Activated CD4-positive, alpha-beta T cell treated with anti-CD3 and anti-CD28 coated beads for 36 hours (primary cell): ENCODE measurements at regions of chr1 and their contacts with region 1.

Region 1: DNA sequence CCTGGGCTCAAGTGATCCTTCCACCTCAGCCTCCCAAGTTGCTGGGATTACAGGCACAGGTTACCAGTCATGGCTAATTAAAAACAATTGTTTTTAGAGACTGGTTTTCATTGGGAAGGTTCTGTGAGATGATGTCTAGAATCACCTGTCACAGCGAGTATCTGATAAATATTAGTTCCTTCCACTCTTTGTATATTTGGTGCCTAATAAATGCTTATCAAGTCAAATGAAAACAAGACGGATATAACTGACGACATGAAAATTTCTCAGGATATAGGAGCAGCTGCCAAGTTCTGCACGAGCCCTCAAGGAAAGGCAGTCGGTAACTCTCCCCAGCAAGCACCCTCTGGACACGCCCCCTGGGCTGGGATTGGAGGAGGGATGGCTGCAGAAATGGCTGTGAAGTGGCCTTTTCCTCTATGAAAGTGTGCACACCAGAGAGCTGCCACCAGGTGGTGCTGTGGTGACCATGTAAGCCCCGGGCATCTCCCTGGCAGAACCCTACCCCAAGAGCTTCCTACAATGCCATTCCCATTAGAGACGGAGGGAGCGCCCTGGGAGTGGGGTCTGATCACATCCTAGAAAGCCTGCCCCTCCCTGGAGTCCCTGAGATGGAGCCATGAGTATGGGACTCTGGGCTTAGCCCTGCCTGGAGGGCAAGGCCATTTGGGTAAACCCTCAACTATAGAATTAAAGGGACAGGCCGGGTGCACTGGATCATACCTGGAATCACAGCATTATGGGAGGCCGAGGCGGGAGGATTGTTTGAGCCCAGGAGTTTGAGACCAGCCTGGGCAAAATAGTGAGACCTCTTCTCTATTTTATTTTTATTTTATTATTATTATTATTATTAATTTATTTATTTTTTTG is 50.9 kb downstream of the HTR6 start:
- DNase-seq: peak; percentile 95
- ATAC-seq: peak; percentile 77
- H3K4me3 Mint-ChIP-seq: no peak overlapping the region
- H3K27ac Mint-ChIP-seq: no peak overlapping the region
- H3K4me1 Mint-ChIP-seq: peaks cover 30% of the 10 kb centered on the region
- H3K27me3 Mint-ChIP-seq: no peaks in the 10 kb centered on the region

Region 2: GRCh38 chr1:19010995-19011844 is 704.3 kb before region 1 on chr1:
- CTCF ChIA-PET with region 1: no interaction called
- POLR2A ChIA-PET with region 1: no interaction called
- intact Hi-C with region 1: loop called in 1 of 2 experiments (anchors 2 kb)
- DNase-seq: peak; percentile 93
- ATAC-seq: peak; percentile 97
- H3K4me3 Mint-ChIP-seq: peak overlapping the region; percentile 12
- H3K27ac Mint-ChIP-seq: peak overlapping the region; percentile 87
- H3K4me1 Mint-ChIP-seq: peaks cover 36% of the 10 kb centered on the region
- H3K27me3 Mint-ChIP-seq: peaks cover 2% of the 10 kb centered on the region

Region 3: GRCh38 chr1:19448491-19449439 is 266.8 kb before region 1 on chr1:
- CTCF ChIA-PET with region 1: no interaction called
- POLR2A ChIA-PET with region 1: no interaction called
- intact Hi-C with region 1: loop called in 1 of 2 experiments (anchors 2 kb)
- DNase-seq: peak; percentile 65
- ATAC-seq: peak; percentile 77
- H3K4me3 Mint-ChIP-seq: peak overlapping the region; percentile 6
- H3K27ac Mint-ChIP-seq: peak overlapping the region; percentile 92
- H3K4me1 Mint-ChIP-seq: peaks cover 91% of the 10 kb centered on the region
- H3K27me3 Mint-ChIP-seq: no peaks in the 10 kb centered on the region

Region 4: GRCh38 chr1:19704247-19705113 is 11.1 kb before region 1 on chr1:
- CTCF ChIA-PET with region 1: interaction called, 27 read pairs
- POLR2A ChIA-PET with region 1: no interaction called
- intact Hi-C with region 1: no loop called
- DNase-seq: peak; percentile 77
- ATAC-seq: peak; percentile 75
- H3K4me3 Mint-ChIP-seq: no peak overlapping the region
- H3K27ac Mint-ChIP-seq: no peak overlapping the region
- H3K4me1 Mint-ChIP-seq: peaks cover 18% of the 10 kb centered on the region
- H3K27me3 Mint-ChIP-seq: no peaks in the 10 kb centered on the region

Region 5: GRCh38 chr1:19799877-19800804 is 84.6 kb after region 1 on chr1 and contains the start of gene TMCO4:
- CTCF ChIA-PET with region 1: interaction called, 3 read pairs
- POLR2A ChIA-PET with region 1: no interaction called
- intact Hi-C with region 1: loop called in 1 of 2 experiments (anchors 1 kb)
- DNase-seq: peak; percentile 73
- ATAC-seq: peak; percentile 59
- H3K4me3 Mint-ChIP-seq: peak within 1 kb of the TSS; percentile 75
- H3K27ac Mint-ChIP-seq: peak within 1 kb of the TSS; percentile 90
- H3K4me1 Mint-ChIP-seq: peaks cover 28% of the 10 kb centered on the region
- H3K27me3 Mint-ChIP-seq: no peaks in the 10 kb centered on the region
- total RNA-seq, gene TMCO4: 13.2 to 15.6 TPM

Region 6: DNA sequence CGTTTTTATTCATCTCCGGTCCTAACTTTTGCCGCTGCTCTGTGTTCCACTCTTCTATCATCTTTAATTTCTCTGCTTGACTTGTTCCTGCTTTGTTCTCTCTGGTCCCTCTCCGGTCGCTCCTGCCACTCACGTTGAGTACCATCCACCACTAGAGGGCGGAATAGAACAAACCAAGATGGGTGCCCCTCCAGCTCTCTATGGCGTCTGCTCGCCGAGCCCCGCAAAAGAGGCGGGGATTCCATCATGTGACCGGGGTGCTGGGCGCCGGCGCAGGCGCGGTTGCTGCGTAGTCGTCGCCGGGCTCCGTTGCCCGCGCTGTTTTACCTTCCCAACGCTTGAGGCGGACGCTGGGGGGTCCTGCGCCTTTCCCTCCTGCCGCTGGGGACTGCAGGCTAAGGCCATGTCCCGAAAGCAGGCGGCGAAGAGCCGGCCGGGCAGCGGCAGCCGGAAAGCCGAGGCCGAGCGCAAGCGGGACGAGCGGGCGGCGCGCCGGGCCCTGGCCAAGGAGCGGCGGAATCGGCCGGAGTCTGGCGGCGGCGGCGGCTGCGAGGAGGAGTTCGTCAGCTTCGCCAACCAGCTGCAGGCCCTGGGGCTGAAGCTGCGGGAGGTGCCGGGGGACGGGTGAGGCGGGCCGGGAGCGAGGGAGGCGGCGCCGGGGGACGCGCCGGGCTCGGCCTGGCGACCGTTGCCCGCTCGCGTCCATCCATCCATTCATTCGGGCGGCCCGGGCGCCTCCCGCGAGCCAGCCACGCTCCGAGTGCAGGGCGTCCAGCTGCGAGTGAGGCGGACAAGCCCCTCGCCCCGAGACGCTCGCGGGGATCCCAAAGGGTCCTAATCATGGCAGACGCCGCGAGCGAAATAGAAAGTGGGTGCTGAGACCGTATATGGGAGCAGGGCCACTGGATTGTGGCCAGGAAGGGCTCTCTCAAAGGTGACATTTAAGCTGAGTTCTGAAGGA is 166.8 kb after region 1 on chr1 and contains the start of gene OTUD3:
- CTCF ChIA-PET with region 1: interaction called, 3 read pairs
- POLR2A ChIA-PET with region 1: no interaction called
- intact Hi-C with region 1: loop called (anchors 2 to 5 kb)
- DNase-seq: peak; percentile 96
- ATAC-seq: peak; percentile 98
- H3K4me3 Mint-ChIP-seq: peak within 1 kb of the TSS; percentile 79
- H3K27ac Mint-ChIP-seq: peak within 1 kb of the TSS; percentile 76
- H3K4me1 Mint-ChIP-seq: peaks cover 36% of the 10 kb centered on the region
- H3K27me3 Mint-ChIP-seq: peaks cover 4% of the 10 kb centered on the region
- total RNA-seq, gene OTUD3: 6.6 to 9.2 TPM

Region 7: DNA sequence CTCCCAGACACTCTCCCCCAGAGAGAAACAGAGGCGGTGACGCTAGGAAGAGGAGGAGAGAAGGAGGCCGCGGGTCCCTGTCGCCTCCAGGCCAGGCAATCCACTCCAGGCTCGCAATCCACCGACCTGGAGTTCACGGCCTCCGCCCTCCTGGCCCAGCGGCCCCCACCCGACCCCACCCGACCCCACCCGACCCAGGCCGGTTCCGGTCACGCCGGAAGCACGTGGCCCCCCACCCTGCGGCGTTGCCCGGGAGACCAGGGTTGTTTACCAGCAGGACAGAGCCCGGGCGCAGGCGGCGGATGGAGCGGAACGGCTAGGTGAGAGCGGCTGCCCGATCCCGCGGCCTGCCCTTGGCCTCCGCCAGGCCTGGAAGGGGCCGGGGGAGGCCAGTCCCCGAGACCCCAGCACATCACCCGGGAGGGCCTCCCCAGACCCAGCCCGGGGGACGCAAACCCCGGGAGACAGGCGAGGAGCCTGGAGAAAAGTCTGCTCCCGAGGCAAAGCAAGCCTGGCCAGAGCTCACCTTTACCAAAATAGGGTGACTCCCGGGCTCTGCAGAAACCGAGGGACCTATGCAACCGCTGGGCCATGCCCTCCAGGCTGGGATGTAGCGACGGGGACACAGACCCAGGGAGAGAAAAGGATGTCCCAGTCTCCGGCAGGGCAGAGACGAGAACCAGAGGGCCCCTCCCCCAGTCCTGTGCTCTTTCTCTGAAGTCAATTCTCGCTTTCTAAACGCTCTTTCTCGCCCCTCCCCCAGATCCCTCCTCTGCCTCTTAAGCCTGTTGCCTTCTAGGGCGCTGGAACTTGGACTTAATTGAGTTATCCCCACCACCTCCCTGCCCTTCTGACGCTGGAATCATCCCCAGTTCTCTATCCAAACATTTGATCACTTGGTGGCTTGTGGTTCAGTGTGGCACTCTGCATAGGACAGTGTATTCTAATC is 470.5 kb after region 1 on chr1 and contains the starts of genes PLA2G2C and UBXN10:
- CTCF ChIA-PET with region 1: no interaction called
- POLR2A ChIA-PET with region 1: no interaction called
- intact Hi-C with region 1: loop called in 1 of 2 experiments (anchors 10 kb)
- DNase-seq: peak; percentile 90
- ATAC-seq: peak; percentile 70
- H3K4me3 Mint-ChIP-seq: peak within 1 kb of the TSS; percentile 68
- H3K27ac Mint-ChIP-seq: peak within 1 kb of the TSS; percentile 85
- H3K4me1 Mint-ChIP-seq: peaks cover 42% of the 10 kb centered on the region
- H3K27me3 Mint-ChIP-seq: peaks cover 15% of the 10 kb centered on the region
- total RNA-seq, gene PLA2G2C: 0.43 to 0.58 TPM
- total RNA-seq, gene UBXN10: 0.41 to 0.63 TPM